BJ (cell line): ENCODE measurements at regions of chr13 and their contacts with region 1.

Region 1: DNA sequence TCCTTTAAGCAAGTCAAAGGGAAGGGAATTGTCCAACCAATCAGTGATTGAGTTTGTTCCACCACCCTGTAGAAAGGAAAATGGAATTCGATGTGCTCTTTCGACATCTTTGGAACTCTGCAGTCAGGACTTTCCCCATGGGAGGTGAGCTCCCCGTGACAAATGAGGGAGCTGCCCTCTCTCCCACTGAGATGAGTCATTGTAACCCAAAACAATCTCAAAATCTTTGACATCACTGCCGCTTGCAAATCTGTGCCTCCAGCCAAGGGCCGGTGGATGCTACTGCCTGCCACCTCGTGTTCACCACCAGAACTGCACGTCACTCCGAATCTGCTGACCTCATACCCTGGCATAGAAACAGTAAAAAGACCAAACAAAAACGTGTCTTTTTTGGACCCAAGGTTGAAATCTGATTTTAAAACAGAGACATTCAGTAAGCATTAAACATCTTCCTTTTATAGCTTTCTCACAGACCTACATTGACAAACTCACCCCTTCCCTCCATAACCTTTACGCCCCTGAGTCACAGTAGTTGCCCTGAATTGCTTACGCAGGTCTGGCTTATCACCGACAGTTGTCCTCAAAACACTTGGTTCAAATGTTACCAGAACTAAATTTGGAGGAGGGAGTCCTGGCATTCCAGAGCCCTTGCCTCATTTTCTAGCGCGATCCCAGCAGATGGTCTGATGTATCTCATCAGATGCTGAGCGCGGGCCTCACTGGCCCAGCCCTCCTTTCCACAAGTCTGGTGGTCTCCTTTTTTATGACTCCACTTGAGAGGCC is 105.2 kb downstream of the COL4A2 start:
- DNase-seq: peak; percentile 97
- H3K4me3 ChIP-seq: no peak overlapping the region
- H3K27me3 ChIP-seq: no peaks in the 10 kb centered on the region
- CTCF ChIP-seq: peak; percentile 92

Region 2: GRCh38 chr13:110216398-110217041 is 195.8 kb before region 1 on chr13:
- CTCF ChIA-PET with region 1: interaction called, 26 read pairs
- POLR2A ChIA-PET with region 1: no interaction called
- DNase-seq: no peak
- H3K4me3 ChIP-seq: no peak overlapping the region
- H3K27me3 ChIP-seq: no peaks in the 10 kb centered on the region
- CTCF ChIP-seq: no peak

Region 3: GRCh38 chr13:110246530-110246929 is 165.8 kb before region 1 on chr13:
- CTCF ChIA-PET with region 1: interaction called, 27 read pairs
- POLR2A ChIA-PET with region 1: no interaction called
- DNase-seq: no peak
- H3K4me3 ChIP-seq: no peak overlapping the region
- H3K27me3 ChIP-seq: no peaks in the 10 kb centered on the region
- CTCF ChIP-seq: no peak

Region 4: DNA sequence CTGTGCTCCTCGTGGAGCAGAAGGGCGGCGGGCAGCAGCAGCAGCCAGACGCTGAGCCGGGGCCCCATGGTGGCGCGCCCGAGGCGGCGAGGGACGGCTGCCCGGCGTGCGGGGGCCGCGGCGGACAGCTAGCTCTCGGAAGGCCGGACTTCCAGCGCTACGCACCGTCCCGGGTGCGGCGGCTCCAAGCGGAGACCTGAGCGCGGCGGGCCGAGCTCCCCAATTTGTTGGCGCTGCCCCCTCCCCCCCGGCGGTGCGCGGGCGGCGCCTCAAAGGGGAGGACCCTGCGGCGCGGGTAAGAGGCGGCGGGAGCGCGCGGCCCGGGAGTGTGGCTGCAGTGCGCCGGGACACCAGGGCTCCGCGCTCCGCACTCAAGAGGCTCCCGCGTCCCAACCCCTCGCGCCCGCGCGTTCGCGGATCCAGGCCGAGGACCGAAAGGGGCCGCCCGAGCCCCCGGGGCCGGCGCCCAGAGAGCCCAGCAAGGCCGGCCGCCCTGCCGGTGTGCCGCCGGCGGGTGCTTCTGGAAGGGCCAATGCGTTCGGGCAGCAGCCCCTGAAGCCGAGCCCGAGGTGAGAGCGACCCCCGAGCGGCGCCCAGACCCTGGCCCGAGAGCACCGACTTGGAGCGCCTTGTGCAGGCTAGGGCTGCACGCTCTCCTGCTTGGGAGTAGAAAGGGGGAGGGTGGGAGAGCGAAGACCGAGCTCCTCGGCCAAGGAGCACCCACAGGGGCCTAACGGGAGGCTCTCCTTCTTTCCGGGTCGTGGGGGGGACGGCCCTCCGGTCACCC is 105.2 kb before region 1 on chr13 and contains the starts of genes COL4A1 and COL4A2:
- CTCF ChIA-PET with region 1: interaction called, 11 read pairs
- POLR2A ChIA-PET with region 1: interaction called, 6 read pairs
- DNase-seq: no peak
- H3K4me3 ChIP-seq: peak within 1 kb of the TSS; percentile 76
- H3K27me3 ChIP-seq: no peaks in the 10 kb centered on the region
- CTCF ChIP-seq: no peak
- polyA plus RNA-seq, gene COL4A1: 345 and 375 TPM in 2 replicates
- polyA plus RNA-seq, gene COL4A2: 410 and 886 TPM in 2 replicates

Region 5: DNA sequence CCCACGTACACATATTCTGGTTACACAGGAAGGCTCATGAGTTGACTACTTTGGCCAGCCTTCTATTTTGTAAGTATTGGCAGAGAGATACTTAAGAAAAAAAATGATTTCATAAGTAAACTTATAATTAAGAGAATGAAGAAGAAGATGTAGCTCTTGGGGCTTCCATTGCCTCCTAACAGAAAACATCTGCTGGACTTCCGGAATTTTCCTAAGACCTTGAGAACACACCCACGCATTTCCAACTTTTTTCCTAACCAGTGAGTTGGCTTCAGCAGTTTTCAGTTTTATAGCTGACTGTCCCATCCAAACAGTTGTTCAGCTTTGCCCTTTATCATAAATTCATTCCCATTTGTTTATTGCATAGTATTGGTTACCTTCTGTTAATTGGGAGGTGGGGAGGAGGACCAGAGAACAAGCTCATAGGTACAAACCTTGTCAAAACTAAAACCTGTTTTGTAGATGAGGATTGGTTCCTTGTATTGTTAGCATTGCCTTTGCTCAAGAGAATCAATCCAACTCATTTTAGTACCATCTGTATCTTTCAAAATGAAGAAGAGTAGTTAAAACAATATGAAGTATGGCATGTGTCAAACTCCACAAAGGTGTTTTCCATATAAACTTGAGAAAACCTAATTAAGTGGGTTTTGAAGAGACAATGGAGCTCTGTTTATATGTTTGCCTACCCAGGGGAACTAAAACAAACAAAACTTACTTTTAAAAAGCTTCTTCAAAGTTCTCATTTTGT is 11.4 kb before region 1 on chr13:
- CTCF ChIA-PET with region 1: interaction called, 8 read pairs
- POLR2A ChIA-PET with region 1: interaction called, 10 read pairs
- DNase-seq: peak; percentile 80
- H3K4me3 ChIP-seq: no peak overlapping the region
- H3K27me3 ChIP-seq: no peaks in the 10 kb centered on the region
- CTCF ChIP-seq: no peak

Region 6: GRCh38 chr13:110436276-110436675 is 24.0 kb after region 1 on chr13:
- CTCF ChIA-PET with region 1: no interaction called
- POLR2A ChIA-PET with region 1: no interaction called
- DNase-seq: no peak
- H3K4me3 ChIP-seq: no peak overlapping the region
- H3K27me3 ChIP-seq: no peaks in the 10 kb centered on the region
- CTCF ChIP-seq: no peak

Region 7: GRCh38 chr13:110726726-110727125 is 314.4 kb after region 1 on chr13:
- CTCF ChIA-PET with region 1: no interaction called
- POLR2A ChIA-PET with region 1: no interaction called
- DNase-seq: no peak
- H3K4me3 ChIP-seq: no peak overlapping the region
- H3K27me3 ChIP-seq: no peaks in the 10 kb centered on the region
- CTCF ChIP-seq: no peak

Region 8: DNA sequence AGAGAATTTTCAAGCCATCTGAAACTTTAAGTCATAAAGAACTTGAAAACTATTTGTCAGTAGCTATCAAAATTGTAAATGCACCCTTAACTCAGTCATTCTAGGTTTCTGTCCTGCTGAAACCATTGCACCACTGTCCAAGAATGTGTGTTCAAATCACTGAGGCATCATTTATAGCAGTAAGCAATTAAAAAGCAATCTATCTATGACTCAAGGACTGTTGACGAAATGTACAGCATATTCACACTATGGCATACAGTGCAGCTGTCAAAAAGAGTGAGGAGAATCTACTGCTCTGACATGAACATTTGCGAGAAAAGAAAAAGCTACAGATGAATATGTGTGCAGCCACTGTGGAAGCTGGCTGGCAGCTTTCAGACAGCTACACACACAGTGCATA is 372.4 kb after region 1 on chr13:
- CTCF ChIA-PET with region 1: no interaction called
- POLR2A ChIA-PET with region 1: no interaction called
- DNase-seq: no peak
- H3K4me3 ChIP-seq: no peak overlapping the region
- H3K27me3 ChIP-seq: peaks cover 3% of the 10 kb centered on the region; the same call in 1 of the 2 replicates
- CTCF ChIP-seq: no peak